ENCODE measurements at regions of chr20 and their contacts with region 1.

Region 1: GRCh38 chr20:18507218-18508021 is at the start of gene SEC23B:
- DNase-seq: peak; percentile 92 to 100 (median 99)
- ATAC-seq: peak; percentile 84 to 95 (median 92)
- H3K4me3 ChIP-seq: peak within 1 kb of the TSS; percentile 91 to 98
- H3K4me3 Mint-ChIP-seq: peak within 1 kb of the TSS; percentile 99 to 100 (median 100)
- H3K27ac ChIP-seq: peak within 1 kb of the TSS; percentile 100
- H3K27ac Mint-ChIP-seq: peak within 1 kb of the TSS; percentile 100
- H3K4me1 ChIP-seq: peaks cover 13 to 18% of the 10 kb centered on the region in 2 experiments
- H3K4me1 Mint-ChIP-seq: peaks cover 45 to 49% (median 46%) of the 10 kb centered on the region in 3 donors
- H3K27me3 ChIP-seq: no peaks in the 10 kb centered on the region
- H3K27me3 Mint-ChIP-seq: peaks cover 0 to under 1% of the 10 kb centered on the region in 2 donors
- total RNA-seq, gene SEC23B: 34.7 to 51.3 (median 42.1) TPM

Region 2: DNA sequence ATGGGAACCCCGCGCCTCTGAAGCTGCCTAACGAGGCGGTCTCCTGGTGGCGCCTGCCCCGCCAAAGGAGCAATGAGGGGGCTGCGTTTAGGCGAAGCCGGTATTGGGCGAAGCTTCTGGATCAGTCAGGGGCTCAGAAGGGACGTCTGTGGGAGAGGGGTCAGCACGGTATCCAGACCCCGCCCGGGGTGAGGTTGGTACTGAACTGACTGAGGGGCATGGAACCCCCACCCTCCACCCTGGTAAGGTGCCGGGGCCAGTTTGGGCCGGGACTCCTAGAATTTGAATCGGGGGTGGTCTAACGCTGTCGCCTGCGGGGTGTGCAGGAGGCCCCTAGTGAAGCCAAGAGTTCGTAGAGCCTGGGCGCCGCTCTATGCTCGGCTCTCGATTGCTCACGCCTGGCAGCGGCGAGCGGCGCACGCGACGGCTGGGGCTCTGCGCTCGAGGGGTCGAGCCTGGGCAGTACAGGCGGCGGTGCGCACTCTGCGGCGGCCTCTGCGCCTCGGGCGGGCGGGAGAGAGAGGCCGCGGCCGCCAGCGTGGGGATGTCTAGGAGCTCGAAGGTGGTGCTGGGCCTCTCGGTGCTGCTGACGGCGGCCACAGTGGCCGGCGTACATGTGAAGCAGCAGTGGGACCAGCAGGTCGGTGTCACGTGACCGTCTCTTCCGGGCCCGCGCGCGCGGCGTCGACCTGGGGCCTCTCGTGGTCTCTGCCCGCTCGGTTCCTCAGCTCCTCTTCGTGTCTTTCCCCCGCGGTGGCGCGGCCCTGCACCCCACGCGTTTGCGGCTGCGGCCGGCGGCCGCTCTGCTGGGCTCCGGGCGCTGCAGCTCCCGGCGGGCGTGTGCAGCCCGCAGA is 369.8 kb before region 1 on chr20 and contains the starts of genes KAT14 and PET117:
- CTCF ChIA-PET with region 1: interaction called in 1 of 2 experiments, 10 read pairs
- POLR2A ChIA-PET with region 1: interaction called, 3 to 6 read pairs
- DNase-seq: peak; percentile 78 to 96 (median 88)
- ATAC-seq: peak; percentile 89 to 95 (median 92)
- H3K4me3 ChIP-seq: peak within 1 kb of the TSS; percentile 82 to 94
- H3K4me3 Mint-ChIP-seq: peak within 1 kb of the TSS; percentile 87 to 89 (median 88)
- H3K27ac ChIP-seq: peak within 1 kb of the TSS; percentile 74
- H3K27ac Mint-ChIP-seq: peak within 1 kb of the TSS; percentile 81 to 89
- H3K4me1 ChIP-seq: peaks cover 14 to 31% of the 10 kb centered on the region in 2 experiments
- H3K4me1 Mint-ChIP-seq: peaks cover 28 to 38% (median 36%) of the 10 kb centered on the region in 3 donors
- H3K27me3 ChIP-seq: no peaks in the 10 kb centered on the region
- H3K27me3 Mint-ChIP-seq: no peaks in the 10 kb centered on the region
- total RNA-seq, gene KAT14: 11.3 to 22.2 (median 20.5) TPM
- total RNA-seq, gene PET117: 10.0 to 15.6 (median 13.4) TPM

Region 3: DNA sequence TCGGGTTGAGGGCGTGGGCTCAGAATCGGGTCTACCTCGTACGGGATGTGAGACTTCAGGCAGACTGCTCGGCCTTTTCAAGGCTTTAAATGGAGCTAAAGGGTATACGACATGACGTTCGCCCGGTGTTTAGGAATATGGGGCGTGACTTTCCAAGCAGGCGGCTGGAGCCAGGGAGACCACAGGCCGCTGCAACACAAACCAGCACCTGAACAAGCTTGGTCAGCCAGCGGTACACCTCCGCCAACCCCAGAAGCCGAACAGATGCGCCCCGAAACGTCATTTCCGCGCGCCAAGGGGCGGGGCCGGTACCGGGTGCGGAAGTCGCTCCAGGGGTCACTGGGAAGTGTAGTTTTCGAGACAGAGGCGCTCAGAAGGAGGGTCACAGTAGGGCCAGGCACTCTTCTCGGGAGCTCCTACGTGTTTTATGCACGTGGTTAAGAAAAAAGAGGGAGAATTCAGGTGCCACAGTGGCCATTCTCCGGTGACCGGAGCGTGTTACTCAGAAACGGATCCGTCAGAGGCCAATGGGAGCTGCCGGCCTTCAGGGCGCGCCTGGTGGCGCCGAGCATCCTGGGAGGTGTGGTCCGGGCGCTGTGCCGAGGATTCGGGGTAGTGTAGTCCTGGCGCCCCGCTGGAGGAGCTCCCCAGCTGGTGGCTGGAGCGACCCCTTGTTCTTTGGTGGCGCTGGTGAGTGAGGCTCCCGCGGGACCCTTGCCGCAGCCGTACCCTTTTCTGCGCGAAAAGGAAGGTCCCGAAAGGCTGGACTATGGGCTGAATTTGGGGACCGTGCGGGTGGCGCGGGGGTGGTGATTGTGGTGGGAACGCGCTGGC is 219.3 kb before region 1 on chr20 and contains the start of gene ZNF133:
- CTCF ChIA-PET with region 1: interaction called in 1 of 2 experiments, 10 read pairs
- POLR2A ChIA-PET with region 1: interaction called in 1 of 2 experiments, 11 read pairs
- DNase-seq: peak; percentile 90 to 99 (median 97)
- ATAC-seq: peak; percentile 95 to 97 (median 96)
- H3K4me3 ChIP-seq: peak within 1 kb of the TSS; percentile 67 to 92
- H3K4me3 Mint-ChIP-seq: peak within 1 kb of the TSS; percentile 96 to 99 (median 96)
- H3K27ac ChIP-seq: peak within 1 kb of the TSS; percentile 91
- H3K27ac Mint-ChIP-seq: peak within 1 kb of the TSS; percentile 97 to 100
- H3K4me1 ChIP-seq: peaks cover 6 to 15% of the 10 kb centered on the region in 2 experiments
- H3K4me1 Mint-ChIP-seq: peaks cover 27 to 46% (median 27%) of the 10 kb centered on the region in 3 donors
- H3K27me3 ChIP-seq: peaks cover 0 to 3% of the 10 kb centered on the region in 2 experiments
- H3K27me3 Mint-ChIP-seq: peaks cover 16 to 25% of the 10 kb centered on the region in 2 donors
- total RNA-seq, gene ZNF133: 6.8 to 14.6 (median 9.0) TPM

Region 4: GRCh38 chr20:18466894-18467730 is 40.3 kb before region 1 on chr20 and contains the starts of genes DZANK1 and POLR3F:
- CTCF ChIA-PET with region 1: interaction called, 4 to 31 read pairs
- POLR2A ChIA-PET with region 1: interaction called, 23 to 59 read pairs
- DNase-seq: peak; percentile 83 to 94 (median 89)
- ATAC-seq: peak; percentile 93 to 98 (median 97)
- H3K4me3 ChIP-seq: peak within 1 kb of the TSS; percentile 80 to 93
- H3K4me3 Mint-ChIP-seq: peak within 1 kb of the TSS; percentile 96 to 98 (median 96)
- H3K27ac ChIP-seq: peak within 1 kb of the TSS; percentile 77
- H3K27ac Mint-ChIP-seq: peak within 1 kb of the TSS; percentile 92 to 94
- H3K4me1 ChIP-seq: peaks cover 5 to 19% of the 10 kb centered on the region in 2 experiments
- H3K4me1 Mint-ChIP-seq: peaks cover 26 to 39% (median 30%) of the 10 kb centered on the region in 3 donors
- H3K27me3 ChIP-seq: no peaks in the 10 kb centered on the region
- H3K27me3 Mint-ChIP-seq: no peaks in the 10 kb centered on the region
- total RNA-seq, gene DZANK1: 2.3 to 4.0 (median 3.2) TPM
- total RNA-seq, gene POLR3F: 5.9 to 8.8 (median 8.3) TPM

Region 5: DNA sequence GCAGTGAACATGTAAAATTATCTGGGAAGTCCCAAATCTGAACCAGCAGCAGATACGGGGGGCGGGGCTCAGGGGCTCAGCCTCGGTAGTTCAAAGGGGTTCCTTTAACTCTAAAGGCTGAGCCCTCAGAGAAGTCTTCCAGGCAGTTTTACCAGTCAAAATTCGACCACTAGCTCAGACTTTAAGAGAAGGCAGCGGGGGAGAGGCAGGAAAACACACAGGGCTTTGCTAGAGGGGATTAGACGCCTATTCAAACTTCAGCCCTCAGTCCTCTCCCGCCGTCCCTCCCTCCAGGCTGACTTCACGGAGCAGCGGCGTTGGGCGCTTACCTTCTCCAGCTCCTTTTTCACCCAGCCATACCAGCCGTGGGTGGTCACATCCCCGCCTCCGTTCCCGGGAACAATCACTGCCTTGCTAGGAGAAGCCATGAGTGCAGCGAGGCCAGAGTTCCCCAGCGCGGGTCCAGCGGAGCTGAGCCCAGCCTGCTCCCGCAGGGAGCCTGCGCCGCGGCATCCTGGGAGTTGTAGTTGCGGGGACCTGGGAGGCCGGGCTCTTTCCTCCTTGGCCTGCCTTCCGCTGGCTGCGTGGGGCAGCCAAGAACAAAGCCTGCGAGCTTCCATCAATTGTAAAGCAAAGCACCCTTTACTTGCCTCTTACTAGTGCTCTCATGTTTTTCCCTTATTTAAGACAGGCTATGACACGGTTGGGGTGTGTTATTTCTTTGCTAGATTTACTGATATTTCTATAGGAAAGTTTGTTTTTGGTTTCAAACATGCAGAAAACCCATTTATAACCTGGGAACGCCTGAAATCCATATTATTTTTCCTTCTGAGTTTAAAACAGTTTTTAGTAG is 10.5 kb before region 1 on chr20 and contains the start of gene RBBP9:
- CTCF ChIA-PET with region 1: interaction called, 5 to 41 read pairs
- POLR2A ChIA-PET with region 1: interaction called, 24 to 56 read pairs
- DNase-seq: peak; percentile 42 to 84 (median 65)
- ATAC-seq: peak; percentile 98 to 100 (median 99)
- H3K4me3 ChIP-seq: peak within 1 kb of the TSS; percentile 91 to 97
- H3K4me3 Mint-ChIP-seq: peak within 1 kb of the TSS; percentile 93 to 97 (median 95)
- H3K27ac ChIP-seq: peak within 1 kb of the TSS; percentile 64
- H3K27ac Mint-ChIP-seq: peak within 1 kb of the TSS; percentile 11 to 91
- H3K4me1 ChIP-seq: peaks cover 10% of the 10 kb centered on the region in 2 experiments
- H3K4me1 Mint-ChIP-seq: peaks cover 11 to 21% (median 19%) of the 10 kb centered on the region in 3 donors
- H3K27me3 ChIP-seq: no peaks in the 10 kb centered on the region
- H3K27me3 Mint-ChIP-seq: peaks cover 0 to 3% of the 10 kb centered on the region in 2 donors
- total RNA-seq, gene RBBP9: 5.9 to 8.4 (median 7.3) TPM

Region 6: GRCh38 chr20:18566892-18567742 is 59.7 kb after region 1 on chr20 and contains the start of gene SMIM26:
- CTCF ChIA-PET with region 1: interaction called in 1 of 2 experiments, 4 read pairs
- POLR2A ChIA-PET with region 1: interaction called, 6 to 18 read pairs
- DNase-seq: peak; percentile 87 to 96 (median 93)
- ATAC-seq: peak; percentile 99
- H3K4me3 ChIP-seq: peak within 1 kb of the TSS; percentile 76 to 78
- H3K4me3 Mint-ChIP-seq: peak within 1 kb of the TSS; percentile 94 to 97 (median 96)
- H3K27ac ChIP-seq: peak within 1 kb of the TSS; percentile 89
- H3K27ac Mint-ChIP-seq: peak within 1 kb of the TSS; percentile 97 to 99
- H3K4me1 ChIP-seq: peaks cover 5 to 17% of the 10 kb centered on the region in 2 experiments
- H3K4me1 Mint-ChIP-seq: peaks cover 21 to 28% (median 23%) of the 10 kb centered on the region in 3 donors
- H3K27me3 ChIP-seq: no peaks in the 10 kb centered on the region
- H3K27me3 Mint-ChIP-seq: no peaks in the 10 kb centered on the region
- total RNA-seq, gene SMIM26: 54.9 to 67.9 (median 63.4) TPM

Region 7: DNA sequence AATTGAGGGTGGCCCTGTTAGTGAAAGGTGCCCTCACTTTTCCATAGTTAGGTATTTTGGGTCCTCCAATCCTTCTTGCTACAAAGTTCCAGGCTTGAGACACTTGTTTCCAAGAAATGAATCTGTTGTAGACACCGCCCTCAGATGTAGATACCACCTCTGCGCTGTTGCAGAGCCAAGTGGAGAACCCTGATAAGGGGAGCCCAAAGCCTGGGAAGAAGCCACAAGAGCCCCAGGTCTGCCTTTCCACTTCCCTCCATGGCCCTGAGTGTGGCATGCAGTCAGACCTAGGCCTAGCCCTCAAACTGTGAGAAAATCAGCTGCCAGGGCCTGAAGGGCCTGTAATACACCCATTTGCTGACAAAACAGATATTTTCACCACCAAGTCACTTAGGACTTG is 117.5 kb after region 1 on chr20:
- CTCF ChIA-PET with region 1: no interaction called
- POLR2A ChIA-PET with region 1: no interaction called
- DNase-seq: no peak
- ATAC-seq: no peak
- H3K4me3 ChIP-seq: no peak overlapping the region
- H3K4me3 Mint-ChIP-seq: no peak overlapping the region
- H3K27ac ChIP-seq: no peak overlapping the region
- H3K27ac Mint-ChIP-seq: no peak overlapping the region
- H3K4me1 ChIP-seq: no peaks in the 10 kb centered on the region
- H3K4me1 Mint-ChIP-seq: no peaks in the 10 kb centered on the region
- H3K27me3 ChIP-seq: no peaks in the 10 kb centered on the region
- H3K27me3 Mint-ChIP-seq: no peaks in the 10 kb centered on the region

Region 8: DNA sequence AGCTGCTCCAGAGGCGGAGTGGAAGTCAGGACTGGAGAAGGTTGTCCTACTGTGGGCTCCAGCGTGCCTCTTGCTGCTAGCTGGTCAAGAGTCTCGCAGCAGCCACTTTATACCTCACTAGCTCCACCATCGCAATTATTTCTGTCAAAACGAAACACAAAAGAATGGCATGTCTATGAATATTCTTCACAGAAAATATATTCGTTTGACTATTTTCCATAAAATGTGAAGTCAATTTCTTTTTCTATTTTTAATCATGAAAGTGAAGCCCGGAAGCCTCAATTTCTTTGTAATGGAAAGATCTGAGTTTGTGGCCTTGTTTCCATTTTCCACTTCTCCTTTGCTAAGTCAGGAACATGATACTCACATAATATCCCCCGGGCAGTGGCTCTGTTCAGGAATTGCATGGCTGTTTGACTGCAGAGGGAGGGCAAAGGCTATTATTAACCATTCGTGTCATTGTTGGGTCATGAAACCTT is 132.1 kb after region 1 on chr20:
- CTCF ChIA-PET with region 1: no interaction called
- POLR2A ChIA-PET with region 1: no interaction called
- DNase-seq: no peak
- ATAC-seq: no peak
- H3K4me3 ChIP-seq: no peak overlapping the region
- H3K4me3 Mint-ChIP-seq: no peak overlapping the region
- H3K27ac ChIP-seq: no peak overlapping the region
- H3K27ac Mint-ChIP-seq: no peak overlapping the region
- H3K4me1 ChIP-seq: no peaks in the 10 kb centered on the region
- H3K4me1 Mint-ChIP-seq: peaks cover 6 to 13% (median 8%) of the 10 kb centered on the region in 3 donors
- H3K27me3 ChIP-seq: no peaks in the 10 kb centered on the region
- H3K27me3 Mint-ChIP-seq: no peaks in the 10 kb centered on the region